HepG2 (cell line): ENCODE measurements at regions of chr6 and their contacts with region 1.

Region 1: DNA sequence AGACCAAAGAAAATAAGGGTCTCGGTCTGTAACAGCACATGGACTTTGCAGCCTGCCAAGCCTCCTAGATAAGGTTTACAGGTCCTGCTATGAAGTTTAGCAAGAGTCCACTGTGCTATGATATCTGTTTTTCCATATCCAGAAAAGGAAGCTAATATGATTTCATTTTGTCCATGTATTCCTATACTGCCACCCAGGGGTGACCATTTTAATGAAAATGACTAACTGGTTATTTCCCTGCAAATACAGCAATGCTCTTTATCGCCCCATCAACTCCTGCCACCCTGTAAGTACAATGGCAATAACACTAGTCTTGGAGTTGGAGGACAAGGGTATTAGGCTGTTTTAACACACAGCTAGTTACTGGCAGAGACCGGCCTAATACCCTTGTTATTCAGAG is 115.1 kb upstream of the GLP1R start:
- DNase-seq: peak; percentile 24
- ATAC-seq: peak; percentile 67
- H3K4me3 ChIP-seq: no peak overlapping the region
- H3K27ac ChIP-seq: no peak overlapping the region
- H3K4me1 ChIP-seq: no peaks in the 10 kb centered on the region
- H3K27me3 ChIP-seq: no peaks in the 10 kb centered on the region
- CTCF ChIP-seq: peak; percentile 52
- EP300 ChIP-seq: no peak
- POLR2A ChIP-seq: no peak
- RAD21 ChIP-seq: no peak

Region 2: GRCh38 chr6:38871741-38872568 is 61.5 kb before region 1 on chr6:
- CTCF ChIA-PET with region 1: interaction called, 6 read pairs
- POLR2A ChIA-PET with region 1: no interaction called
- in situ Hi-C with region 1: loop called (anchors 5 kb)
- intact Hi-C with region 1: loop called (anchors 2 kb)
- DNase-seq: peak; percentile 41
- ATAC-seq: peak; percentile 80
- H3K4me3 ChIP-seq: no peak overlapping the region
- H3K27ac ChIP-seq: no peak overlapping the region
- H3K4me1 ChIP-seq: no peaks in the 10 kb centered on the region
- H3K27me3 ChIP-seq: no peaks in the 10 kb centered on the region
- CTCF ChIP-seq: peak; percentile 92
- EP300 ChIP-seq: no peak
- POLR2A ChIP-seq: no peak
- RAD21 ChIP-seq: peak; percentile 69